Activated B cell treated with CpG ODN at 0.5 μM for 24 hours (primary cell): ENCODE measurements at regions of chr3 and their contacts with region 1.

Region 1: GRCh38 chr3:39447637-39448483 is 19.6 kb upstream of the MOBP start:
- DNase-seq: no peak
- ATAC-seq: peak; percentile 57
- H3K4me3 Mint-ChIP-seq: no peak overlapping the region
- H3K27ac Mint-ChIP-seq: no peak overlapping the region
- H3K4me1 Mint-ChIP-seq: no peaks in the 10 kb centered on the region
- H3K27me3 Mint-ChIP-seq: peaks cover 6% of the 10 kb centered on the region
- CTCF ChIP-seq: peak; percentile 71

Region 2: DNA sequence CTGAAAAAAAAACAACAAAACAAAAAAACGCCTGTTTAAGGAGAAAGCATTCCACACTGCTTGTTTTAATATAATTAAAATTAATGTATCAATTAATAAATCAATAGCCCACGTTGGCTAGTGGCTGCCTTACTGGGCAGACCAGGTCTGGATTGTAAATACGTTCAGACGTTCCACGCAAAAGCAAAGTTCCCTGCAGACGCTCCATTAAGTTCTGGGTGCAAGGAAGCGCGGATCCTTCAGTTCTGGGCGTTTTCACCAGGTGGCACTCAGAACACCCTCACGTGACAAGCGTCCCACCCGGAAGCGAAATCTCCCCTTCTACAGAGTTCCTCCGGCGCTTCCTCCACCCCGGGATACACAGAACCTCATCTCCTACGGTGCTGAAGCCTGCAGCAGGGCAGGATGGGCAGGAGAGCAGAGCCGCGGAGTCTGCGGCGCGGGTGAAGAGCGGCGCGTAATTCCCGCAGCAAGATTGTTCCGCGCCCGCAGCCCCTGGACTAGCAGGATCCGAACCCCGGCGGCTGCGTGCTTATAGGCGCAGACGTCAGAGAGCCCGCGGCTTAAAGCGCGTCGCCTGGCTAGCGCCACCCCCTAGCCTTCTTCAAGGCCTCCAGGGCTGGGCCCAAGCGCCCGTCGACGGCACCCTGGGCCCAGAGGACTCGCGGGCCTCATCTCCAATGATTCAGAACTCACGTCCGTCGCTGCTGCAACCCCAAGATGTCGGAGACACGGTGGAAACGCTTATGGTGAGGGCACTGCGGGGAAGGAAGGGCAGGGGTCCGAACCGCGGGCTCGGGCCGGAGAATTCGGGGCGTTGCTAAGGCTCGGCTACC is 64.6 kb before region 1 on chr3 and contains the start of gene SLC25A38:
- CTCF ChIA-PET with region 1: no interaction called
- POLR2A ChIA-PET with region 1: no interaction called
- intact Hi-C with region 1: no loop called
- DNase-seq: peak; percentile 72
- ATAC-seq: peak; percentile 73
- H3K4me3 Mint-ChIP-seq: peak within 1 kb of the TSS; percentile 99
- H3K27ac Mint-ChIP-seq: peak within 1 kb of the TSS; percentile 100
- H3K4me1 Mint-ChIP-seq: peaks cover 49% of the 10 kb centered on the region
- H3K27me3 Mint-ChIP-seq: no peaks in the 10 kb centered on the region
- CTCF ChIP-seq: no peak
- total RNA-seq, gene SLC25A38: 51.6 and 52.9 TPM in 2 replicates

Region 3: GRCh38 chr3:39414421-39414907 is 33.4 kb before region 1 on chr3:
- CTCF ChIA-PET with region 1: no interaction called
- POLR2A ChIA-PET with region 1: interaction called, 3 read pairs
- intact Hi-C with region 1: loop called (anchors 2 kb)
- DNase-seq: no peak
- ATAC-seq: peak; percentile 10
- H3K4me3 Mint-ChIP-seq: no peak overlapping the region
- H3K27ac Mint-ChIP-seq: peak overlapping the region; percentile 43
- H3K4me1 Mint-ChIP-seq: peaks cover 24% of the 10 kb centered on the region
- H3K27me3 Mint-ChIP-seq: no peaks in the 10 kb centered on the region
- CTCF ChIP-seq: no peak

Region 4: GRCh38 chr3:39505866-39506742 is 58.2 kb after region 1 on chr3:
- CTCF ChIA-PET with region 1: no interaction called
- POLR2A ChIA-PET with region 1: no interaction called
- intact Hi-C with region 1: no loop called
- DNase-seq: no peak
- ATAC-seq: no peak
- H3K4me3 Mint-ChIP-seq: no peak overlapping the region
- H3K27ac Mint-ChIP-seq: no peak overlapping the region
- H3K4me1 Mint-ChIP-seq: no peaks in the 10 kb centered on the region
- H3K27me3 Mint-ChIP-seq: peaks cover 21% of the 10 kb centered on the region
- CTCF ChIP-seq: no peak